GM10248 (cell line): ENCODE measurements at regions of chr12 and their contacts with region 1.

Region 1: GRCh38 chr12:84502907-84503787 is 409.5 kb downstream of the SLC6A15 start:
- DNase-seq: peak; percentile 13
- CTCF ChIP-seq: peak; percentile 54

Region 2: GRCh38 chr12:82523996-82524395 is 1979.2 kb before region 1 on chr12:
- CTCF ChIA-PET with region 1: interaction called, 11 read pairs
- POLR2A ChIA-PET with region 1: no interaction called
- DNase-seq: no peak
- CTCF ChIP-seq: no peak

Region 3: DNA sequence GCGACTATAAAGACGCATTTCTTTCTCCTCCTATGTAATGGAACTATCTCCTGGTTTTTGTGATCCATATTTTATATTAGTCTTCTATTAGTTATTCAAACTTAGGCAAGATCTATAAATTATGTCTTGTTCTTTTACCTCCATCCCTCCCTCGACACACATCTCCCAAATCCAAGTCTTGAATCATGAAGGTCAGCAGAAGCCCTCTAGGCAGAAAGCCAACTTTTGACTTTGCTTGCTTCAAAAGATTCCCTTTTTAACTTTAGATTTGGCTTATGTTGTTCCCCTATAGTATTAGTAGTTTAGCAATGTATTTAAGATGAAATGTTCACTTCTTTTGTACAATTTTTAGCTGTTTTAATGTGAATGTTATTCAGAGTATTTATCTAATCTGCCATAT is 280.3 kb before region 1 on chr12:
- CTCF ChIA-PET with region 1: no interaction called
- POLR2A ChIA-PET with region 1: no interaction called
- DNase-seq: no peak
- CTCF ChIP-seq: no peak